ENCODE measurements at regions of chr11 and their contacts with region 1.

Region 1: DNA sequence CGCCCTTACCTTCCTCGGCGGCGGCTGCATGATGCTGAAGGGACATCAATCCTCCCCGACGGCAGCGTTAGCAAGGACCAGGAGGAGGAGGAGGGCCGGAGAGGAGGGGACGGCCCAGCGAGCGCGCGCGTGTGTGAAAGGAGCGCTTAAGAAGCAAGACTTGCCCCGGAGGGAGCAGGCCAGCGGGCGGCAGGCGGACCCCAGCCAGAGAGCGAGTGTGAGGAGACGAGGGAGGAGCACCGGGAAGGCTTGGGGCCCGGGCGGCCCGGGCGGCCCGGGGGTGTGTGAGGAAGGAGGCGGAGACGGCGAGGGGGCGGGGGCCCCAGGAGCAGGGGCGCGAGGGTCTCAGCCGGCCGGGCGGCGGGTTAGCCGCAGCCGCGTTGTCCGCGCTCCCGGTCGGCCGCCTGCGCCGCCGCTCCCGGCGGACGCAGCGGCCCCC is 251 bp downstream of the FCHSD2 start:
- DNase-seq: peak in 6 of 7 donors; percentile 72 to 84 (median 80)
- H3K4me3 ChIP-seq: peak overlapping the region; percentile 51 to 90 (median 70)
- H3K27ac ChIP-seq: peak overlapping the region; percentile 37 to 97 (median 95)
- H3K4me1 ChIP-seq: peaks cover 29 to 44% of the 10 kb centered on the region in 2 donors
- H3K27me3 ChIP-seq: no peaks in the 10 kb centered on the region
- CTCF ChIP-seq: no peak
- POLR2A ChIP-seq: peak in 1 of 2 donors; percentile 63

Region 2: DNA sequence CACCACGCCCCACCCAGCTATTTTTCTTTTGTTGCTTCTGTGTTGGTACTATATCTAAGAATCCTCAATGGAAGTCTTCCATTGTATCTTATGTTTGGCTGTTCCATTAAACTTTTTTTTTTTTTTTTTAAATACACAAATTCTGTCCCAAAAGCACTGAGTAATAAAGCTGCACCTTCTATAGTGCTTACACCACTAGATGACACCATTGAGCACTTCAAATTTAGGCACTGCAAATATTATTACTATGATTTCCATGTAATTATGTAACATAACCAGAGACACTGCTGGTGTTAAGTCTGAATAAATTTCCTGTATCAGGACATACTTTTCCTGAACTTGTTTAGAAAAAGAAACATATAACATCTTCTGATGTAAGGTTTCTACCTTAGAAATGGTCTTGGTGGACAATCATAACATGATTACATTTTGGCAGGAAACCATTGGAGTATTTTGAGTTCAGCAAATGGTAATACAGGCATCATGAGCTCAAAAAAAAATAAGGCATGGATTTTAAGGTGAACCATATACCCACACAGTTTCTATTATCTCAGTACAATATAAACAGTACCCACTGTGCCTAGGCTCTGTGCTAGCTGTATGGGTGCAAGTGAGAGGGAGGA is 217.2 kb before region 1 on chr11:
- intact Hi-C with region 1: loop called in 1 of 2 experiments (anchors 10 kb)
- DNase-seq: no peak
- H3K4me3 ChIP-seq: no peak overlapping the region
- H3K27ac ChIP-seq: peak overlapping the region in 1 of 5 donors; percentile 2
- H3K4me1 ChIP-seq: peaks cover 19 to 28% of the 10 kb centered on the region in 2 donors
- H3K27me3 ChIP-seq: no peaks in the 10 kb centered on the region
- CTCF ChIP-seq: peak in 5 of 6 experiments; percentile 38 to 83 (median 59)
- POLR2A ChIP-seq: no peak

Region 3: GRCh38 chr11:73335204-73335923 is 193.5 kb after region 1 on chr11:
- intact Hi-C with region 1: no loop called
- DNase-seq: peak; percentile 73 to 94 (median 87)
- H3K4me3 ChIP-seq: no peak overlapping the region
- H3K27ac ChIP-seq: peak overlapping the region in 2 of 5 donors; percentile 3 to 78
- H3K4me1 ChIP-seq: peaks cover 0 to 21% of the 10 kb centered on the region in 2 donors
- H3K27me3 ChIP-seq: no peaks in the 10 kb centered on the region
- CTCF ChIP-seq: peak; percentile 87 to 99 (median 94)
- POLR2A ChIP-seq: no peak

Measured in adrenal gland (tissue), 19 donors.